CD8-positive, alpha-beta T cell (primary cell): ENCODE measurements at regions of chr13 and their contacts with region 1.

Region 1: DNA sequence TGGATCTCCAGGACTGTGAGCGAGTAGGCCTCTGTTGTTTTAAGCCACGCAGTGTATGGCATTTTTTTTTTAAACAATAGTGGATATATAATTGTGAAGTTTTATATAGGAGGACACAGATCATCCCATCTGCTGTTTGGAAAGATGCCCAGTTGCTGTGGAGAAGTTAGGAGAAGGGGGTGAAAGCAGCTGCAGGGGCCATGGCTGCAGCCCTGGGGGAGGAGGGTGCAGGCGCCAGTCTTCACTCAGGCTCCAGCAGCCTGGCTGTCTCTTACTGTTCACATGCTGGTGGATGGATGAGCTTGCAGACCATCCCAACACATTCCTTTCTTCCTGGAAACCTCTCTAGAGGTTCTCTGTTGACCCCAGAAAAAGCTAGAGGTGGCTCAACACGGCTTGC is 242.3 kb downstream of the TEX29 start:
- DNase-seq: no peak
- ATAC-seq: no peak
- H3K4me3 ChIP-seq: no peak overlapping the region
- H3K4me3 Mint-ChIP-seq: no peak overlapping the region
- H3K27ac ChIP-seq: no peak overlapping the region
- H3K27ac Mint-ChIP-seq: no peak overlapping the region
- H3K4me1 ChIP-seq: no peaks in the 10 kb centered on the region
- H3K4me1 Mint-ChIP-seq: no peaks in the 10 kb centered on the region
- H3K27me3 ChIP-seq: no peaks in the 10 kb centered on the region
- H3K27me3 Mint-ChIP-seq: peaks cover 17% of the 10 kb centered on the region
- CTCF ChIP-seq: no peak

Region 2: DNA sequence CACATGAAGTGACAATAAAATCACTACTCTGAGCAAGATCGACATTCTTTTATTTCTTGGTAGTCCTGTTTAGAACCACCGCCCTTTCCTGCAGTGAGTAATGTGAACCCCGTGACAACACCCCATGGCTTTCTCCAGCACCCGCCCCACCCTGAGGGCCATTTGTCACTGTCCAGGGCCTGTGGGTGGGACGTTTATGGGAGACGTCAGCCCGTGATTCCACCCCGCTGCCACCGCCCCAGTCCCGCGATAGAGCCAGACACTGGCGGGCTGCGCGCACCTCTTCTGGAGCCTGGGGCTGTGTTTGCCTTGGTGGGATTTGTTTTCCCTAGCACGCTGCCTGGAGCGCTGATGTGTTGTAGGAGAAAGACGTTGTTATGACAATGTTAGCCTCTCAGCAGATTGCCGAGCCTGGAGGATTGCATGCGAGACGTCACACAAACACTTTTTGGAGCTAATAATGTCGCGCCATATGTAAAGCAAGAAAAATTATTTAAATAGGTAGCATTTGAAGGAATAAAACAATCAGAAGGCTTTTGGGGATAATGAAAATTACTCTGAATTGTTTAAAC is 21.5 kb after region 1 on chr13:
- CTCF ChIA-PET with region 1: no interaction called
- POLR2A ChIA-PET with region 1: no interaction called
- intact Hi-C with region 1: no loop called
- DNase-seq: no peak
- ATAC-seq: no peak
- H3K4me3 ChIP-seq: no peak overlapping the region
- H3K4me3 Mint-ChIP-seq: no peak overlapping the region
- H3K27ac ChIP-seq: no peak overlapping the region
- H3K27ac Mint-ChIP-seq: no peak overlapping the region
- H3K4me1 ChIP-seq: no peaks in the 10 kb centered on the region
- H3K4me1 Mint-ChIP-seq: no peaks in the 10 kb centered on the region
- H3K27me3 ChIP-seq: no peaks in the 10 kb centered on the region
- H3K27me3 Mint-ChIP-seq: peaks cover 2% of the 10 kb centered on the region
- CTCF ChIP-seq: no peak

Region 3: DNA sequence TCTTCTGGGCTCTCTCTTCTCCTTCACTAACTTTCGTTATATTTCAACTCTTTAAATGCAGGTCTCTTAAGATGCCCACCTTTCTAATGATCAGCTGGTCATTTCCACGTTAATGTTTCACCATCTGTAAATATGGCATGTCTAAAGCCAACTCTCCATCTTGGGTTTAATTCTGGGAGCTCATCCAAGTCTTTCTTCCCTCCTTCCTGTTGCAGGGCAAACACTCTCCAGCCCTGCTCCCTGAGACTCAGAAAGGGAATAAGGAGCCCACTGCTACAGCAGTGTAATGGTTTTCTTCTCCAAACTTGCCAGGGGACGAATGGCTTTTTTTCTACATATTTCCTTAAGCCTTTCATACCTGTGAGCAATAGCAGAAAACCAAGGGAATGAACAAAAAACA is 431.0 kb after region 1 on chr13:
- CTCF ChIA-PET with region 1: no interaction called
- POLR2A ChIA-PET with region 1: no interaction called
- intact Hi-C with region 1: loop called in 1 of 2 experiments (anchors 10 kb)
- DNase-seq: no peak
- ATAC-seq: no peak
- H3K4me3 ChIP-seq: no peak overlapping the region
- H3K4me3 Mint-ChIP-seq: no peak overlapping the region
- H3K27ac ChIP-seq: no peak overlapping the region
- H3K27ac Mint-ChIP-seq: no peak overlapping the region
- H3K4me1 ChIP-seq: no peaks in the 10 kb centered on the region
- H3K4me1 Mint-ChIP-seq: no peaks in the 10 kb centered on the region
- H3K27me3 ChIP-seq: no peaks in the 10 kb centered on the region
- H3K27me3 Mint-ChIP-seq: peaks cover 14% of the 10 kb centered on the region
- CTCF ChIP-seq: no peak